ENCODE measurements at regions of chr2 and their contacts with region 1.

Region 1: DNA sequence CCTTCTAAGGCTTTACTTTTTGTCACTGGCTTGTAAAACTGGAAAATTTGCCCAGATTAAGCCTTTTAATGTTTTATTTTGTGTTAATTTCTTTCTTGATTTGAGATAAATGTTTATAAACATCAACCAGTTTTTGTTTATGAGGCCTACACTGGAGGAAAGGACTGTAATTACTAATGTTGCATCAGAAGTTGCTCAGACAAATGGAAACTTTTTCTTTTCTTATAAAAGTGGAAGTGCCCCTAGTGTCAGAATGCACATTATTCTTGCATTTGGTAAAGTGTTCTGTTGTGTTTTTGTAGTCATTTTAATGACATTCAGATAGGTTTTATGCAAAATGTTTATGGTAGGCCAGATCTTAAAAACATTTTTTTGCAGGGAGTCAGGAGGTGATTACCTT is 25.3 kb downstream of the LCLAT1 start:
- DNase-seq: no peak
- H3K4me3 Mint-ChIP-seq: no peak overlapping the region
- H3K27ac Mint-ChIP-seq: peak overlapping the region; percentile 5
- H3K4me1 Mint-ChIP-seq: peaks cover 23% of the 10 kb centered on the region
- H3K27me3 Mint-ChIP-seq: no peaks in the 10 kb centered on the region

Region 2: GRCh38 chr2:30225131-30225762 is 247.1 kb before region 1 on chr2:
- intact Hi-C with region 1: no loop called
- DNase-seq: peak; percentile 48
- H3K4me3 Mint-ChIP-seq: peak overlapping the region; percentile 91
- H3K27ac Mint-ChIP-seq: peak overlapping the region; percentile 97
- H3K4me1 Mint-ChIP-seq: peaks cover 77% of the 10 kb centered on the region
- H3K27me3 Mint-ChIP-seq: peaks cover 5% of the 10 kb centered on the region

Region 3: DNA sequence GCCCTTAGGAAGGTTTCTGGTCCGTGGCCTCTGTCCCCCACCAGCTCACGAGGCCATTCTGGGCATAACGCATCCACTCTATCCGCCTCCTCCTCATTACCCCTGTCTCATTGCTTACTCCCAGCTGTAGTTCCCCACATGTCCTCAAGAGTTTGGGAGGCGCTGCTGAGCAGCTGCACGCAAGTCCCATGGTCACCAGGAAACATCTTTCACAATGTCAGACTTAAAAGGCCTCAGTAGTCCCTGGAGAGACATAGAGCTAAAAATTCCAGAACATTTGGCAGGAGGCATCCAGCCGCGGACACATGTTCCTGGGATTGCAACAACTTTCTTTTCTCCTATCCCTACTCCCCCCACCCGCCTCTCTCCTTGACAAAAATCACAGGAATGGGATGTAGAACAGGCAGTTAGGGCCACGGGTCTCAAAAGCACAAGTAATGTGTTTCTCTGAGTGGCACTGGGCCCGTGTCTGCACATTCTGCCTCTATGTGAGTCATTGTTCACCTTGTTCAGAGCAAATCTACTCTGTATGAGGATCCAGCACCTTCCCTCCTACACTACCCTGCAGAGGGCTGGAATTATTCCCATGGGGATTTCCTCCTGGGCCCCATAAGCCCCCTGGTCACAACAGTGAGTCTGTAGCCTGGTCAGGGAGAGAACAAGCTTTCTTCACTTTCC is 232.9 kb before region 1 on chr2:
- intact Hi-C with region 1: loop called (anchors 5 kb)
- DNase-seq: peak; percentile 53
- H3K4me3 Mint-ChIP-seq: peak overlapping the region; percentile 61
- H3K27ac Mint-ChIP-seq: peak overlapping the region; percentile 86
- H3K4me1 Mint-ChIP-seq: peaks cover 75% of the 10 kb centered on the region
- H3K27me3 Mint-ChIP-seq: no peaks in the 10 kb centered on the region

Region 4: DNA sequence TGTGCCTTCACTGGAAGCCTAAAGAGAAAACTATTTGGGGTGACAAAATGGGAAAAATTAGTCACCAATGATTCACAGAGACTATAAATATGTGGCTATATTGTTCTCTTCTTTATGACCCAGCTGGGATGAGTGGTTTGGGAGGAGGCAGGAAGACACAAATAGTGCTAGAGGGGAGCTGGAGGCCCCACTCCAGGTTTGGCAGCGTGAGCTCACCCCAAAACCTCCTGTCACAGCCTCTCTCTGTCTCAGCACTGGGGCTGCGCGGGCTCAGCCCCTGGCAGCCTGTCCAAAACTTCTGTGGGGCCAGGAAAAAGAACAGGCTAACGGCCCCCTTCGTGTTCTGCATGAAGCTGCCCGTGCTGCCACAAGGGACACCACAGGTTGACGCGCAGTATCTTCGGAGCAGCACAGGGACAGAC is 98.4 kb before region 1 on chr2:
- intact Hi-C with region 1: loop called (anchors 5 kb)
- DNase-seq: no peak
- H3K4me3 Mint-ChIP-seq: no peak overlapping the region
- H3K27ac Mint-ChIP-seq: peak overlapping the region; percentile 49
- H3K4me1 Mint-ChIP-seq: peaks cover 35% of the 10 kb centered on the region
- H3K27me3 Mint-ChIP-seq: no peaks in the 10 kb centered on the region

Region 5: GRCh38 chr2:30492185-30492584 is 19.9 kb after region 1 on chr2:
- intact Hi-C with region 1: no loop called
- DNase-seq: no peak
- H3K4me3 Mint-ChIP-seq: no peak overlapping the region
- H3K27ac Mint-ChIP-seq: no peak overlapping the region
- H3K4me1 Mint-ChIP-seq: peaks cover 17% of the 10 kb centered on the region
- H3K27me3 Mint-ChIP-seq: no peaks in the 10 kb centered on the region